HepG2 (cell line): ENCODE measurements at regions of chr22 and their contacts with region 1.

Region 1: DNA sequence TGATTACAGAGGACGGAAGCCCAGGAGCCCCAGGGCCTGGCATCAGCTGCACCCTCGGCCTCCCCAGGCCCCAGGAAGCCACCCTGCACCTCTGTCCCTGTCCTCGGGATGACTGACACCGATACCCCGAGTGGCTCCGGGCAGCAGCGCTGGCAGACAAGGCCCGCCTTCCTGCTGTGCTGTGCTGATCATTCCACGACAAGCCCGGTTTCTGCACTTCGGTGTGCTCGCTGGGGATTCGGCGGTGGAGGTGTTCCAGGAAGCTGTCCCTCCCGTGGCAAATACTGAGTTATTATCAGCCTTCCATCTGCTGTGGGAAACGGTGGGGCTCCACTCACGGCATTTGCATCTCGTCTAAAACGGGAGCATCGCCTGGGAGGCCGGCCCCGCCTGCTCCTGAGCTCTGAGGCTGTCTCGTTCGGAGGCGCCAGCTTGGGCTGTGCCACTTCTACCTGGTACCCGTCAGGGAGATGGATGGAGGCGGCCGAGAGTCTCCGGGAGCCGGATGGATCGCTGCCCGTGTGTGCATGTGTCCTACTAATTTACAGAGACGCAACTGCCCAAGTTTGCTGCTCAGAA is 506.1 kb downstream of the BRD1 start:
- DNase-seq: no peak
- ATAC-seq: no peak
- H3K4me3 ChIP-seq: no peak overlapping the region
- H3K27ac ChIP-seq: no peak overlapping the region
- H3K4me1 ChIP-seq: no peaks in the 10 kb centered on the region
- H3K27me3 ChIP-seq: peaks cover 7 to 25% of the 10 kb centered on the region in 2 experiments; a peak in 3 of 5 replicates
- CTCF ChIP-seq: no peak
- EP300 ChIP-seq: no peak
- POLR2A ChIP-seq: no peak
- RAD21 ChIP-seq: no peak

Region 2: DNA sequence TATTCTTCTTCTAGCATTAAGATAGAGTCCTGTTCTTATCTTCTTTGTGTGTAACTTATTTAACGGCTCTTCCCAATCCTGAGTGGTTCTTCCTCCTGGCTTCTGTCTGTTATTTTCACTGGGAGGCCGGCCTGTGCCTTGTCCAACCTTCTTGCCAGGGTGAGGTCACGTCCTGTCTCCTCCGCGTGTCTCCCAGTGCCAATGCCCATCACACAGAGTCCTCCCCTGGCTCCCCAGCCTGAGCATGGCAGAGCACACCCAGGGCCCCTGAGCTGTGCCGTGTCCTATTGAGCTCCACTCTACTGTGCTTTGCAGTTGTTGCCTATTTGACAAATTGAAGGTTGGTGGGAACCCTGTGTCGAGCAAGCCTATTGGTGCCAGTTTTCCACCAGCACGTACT is 18.8 kb after region 1 on chr22:
- CTCF ChIA-PET with region 1: no interaction called
- POLR2A ChIA-PET with region 1: no interaction called
- in situ Hi-C with region 1: no loop called
- intact Hi-C with region 1: loop called (anchors 1 kb)
- DNase-seq: no peak
- ATAC-seq: no peak
- H3K4me3 ChIP-seq: no peak overlapping the region
- H3K27ac ChIP-seq: no peak overlapping the region
- H3K4me1 ChIP-seq: no peaks in the 10 kb centered on the region
- H3K27me3 ChIP-seq: peaks cover 0 to 11% of the 10 kb centered on the region in 2 experiments; a peak in 1 of 5 replicates
- CTCF ChIP-seq: no peak
- EP300 ChIP-seq: no peak
- POLR2A ChIP-seq: no peak
- RAD21 ChIP-seq: no peak

Region 3: DNA sequence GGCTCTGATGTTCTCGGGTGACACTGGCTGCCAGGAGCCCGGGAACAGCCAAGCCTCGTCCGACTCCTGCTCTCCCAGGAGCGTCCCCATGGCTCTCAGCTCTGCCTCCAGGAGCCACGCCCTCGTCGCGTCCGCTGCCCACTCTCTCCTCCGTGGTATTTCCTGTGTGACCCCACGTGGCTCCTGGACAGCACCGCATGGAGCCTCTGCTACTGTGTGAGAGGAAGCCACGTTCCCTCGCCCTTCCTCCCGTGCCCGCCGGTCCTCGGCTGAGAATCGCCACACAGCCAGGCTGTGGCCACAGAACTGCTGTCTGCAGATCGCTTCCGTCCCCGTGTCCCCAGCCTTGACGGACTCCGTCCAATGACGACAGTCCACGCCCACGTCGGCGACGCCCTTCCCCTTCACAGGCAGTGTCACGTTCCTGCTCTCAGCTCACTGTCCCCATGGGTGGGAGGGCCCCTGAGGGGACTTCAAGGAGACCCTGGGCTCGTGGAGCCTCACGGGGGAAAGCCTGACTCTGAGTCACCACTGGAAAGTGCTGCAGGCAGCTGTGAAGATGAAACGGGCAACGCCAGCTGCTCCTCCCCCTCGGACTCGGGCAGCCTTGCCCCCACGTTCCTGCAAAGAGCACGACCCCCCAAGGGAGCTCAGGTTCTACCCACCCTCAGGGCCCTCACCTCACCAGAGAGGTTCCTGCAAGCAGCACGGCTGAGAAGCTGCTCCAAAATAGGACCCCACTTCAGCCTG is 47.6 kb after region 1 on chr22:
- CTCF ChIA-PET with region 1: no interaction called
- POLR2A ChIA-PET with region 1: no interaction called
- in situ Hi-C with region 1: no loop called
- intact Hi-C with region 1: no loop called
- DNase-seq: no peak
- ATAC-seq: no peak
- H3K4me3 ChIP-seq: no peak overlapping the region
- H3K27ac ChIP-seq: no peak overlapping the region
- H3K4me1 ChIP-seq: no peaks in the 10 kb centered on the region
- H3K27me3 ChIP-seq: peaks cover 15 to 67% of the 10 kb centered on the region in 2 experiments; a peak in 4 of 5 replicates
- CTCF ChIP-seq: no peak
- EP300 ChIP-seq: no peak
- POLR2A ChIP-seq: no peak
- RAD21 ChIP-seq: no peak